Colonic mucosa (tissue), 4 donors: ENCODE measurements at regions of chr7 and their contacts with region 1.

Region 1: DNA sequence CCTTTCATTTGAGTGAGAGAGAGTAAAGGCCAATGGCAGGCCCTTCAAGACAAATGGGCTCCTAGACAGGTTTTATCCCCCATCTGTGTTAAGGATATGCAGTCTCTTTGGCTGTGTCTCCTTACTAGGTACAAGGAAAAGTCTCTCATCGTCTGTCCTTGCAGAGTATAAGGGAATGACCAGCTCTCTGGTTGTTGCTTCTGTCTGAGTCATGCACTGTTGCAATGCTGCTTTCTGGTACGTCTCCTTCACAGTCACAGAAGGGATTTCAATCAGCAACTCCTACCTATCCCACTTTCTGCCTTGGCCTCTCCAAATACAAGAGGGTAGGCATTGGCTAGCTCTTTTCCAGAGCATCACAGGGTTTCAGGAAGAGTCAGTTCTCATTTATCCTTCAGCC is 48.1 kb downstream of the CTTNBP2 start:
- DNase-seq: no peak
- H3K4me3 ChIP-seq: no peak overlapping the region
- H3K27ac ChIP-seq: no peak overlapping the region
- H3K4me1 ChIP-seq: no peaks in the 10 kb centered on the region
- H3K27me3 ChIP-seq: no peaks in the 10 kb centered on the region
- CTCF ChIP-seq: no peak

Region 2: GRCh38 chr7:117837841-117838240 is 12.7 kb after region 1 on chr7:
- intact Hi-C with region 1: loop called (anchors 2 kb)
- DNase-seq: no peak
- H3K4me3 ChIP-seq: no peak overlapping the region
- H3K27ac ChIP-seq: no peak overlapping the region
- H3K4me1 ChIP-seq: no peaks in the 10 kb centered on the region
- H3K27me3 ChIP-seq: no peaks in the 10 kb centered on the region
- CTCF ChIP-seq: no peak

Region 3: DNA sequence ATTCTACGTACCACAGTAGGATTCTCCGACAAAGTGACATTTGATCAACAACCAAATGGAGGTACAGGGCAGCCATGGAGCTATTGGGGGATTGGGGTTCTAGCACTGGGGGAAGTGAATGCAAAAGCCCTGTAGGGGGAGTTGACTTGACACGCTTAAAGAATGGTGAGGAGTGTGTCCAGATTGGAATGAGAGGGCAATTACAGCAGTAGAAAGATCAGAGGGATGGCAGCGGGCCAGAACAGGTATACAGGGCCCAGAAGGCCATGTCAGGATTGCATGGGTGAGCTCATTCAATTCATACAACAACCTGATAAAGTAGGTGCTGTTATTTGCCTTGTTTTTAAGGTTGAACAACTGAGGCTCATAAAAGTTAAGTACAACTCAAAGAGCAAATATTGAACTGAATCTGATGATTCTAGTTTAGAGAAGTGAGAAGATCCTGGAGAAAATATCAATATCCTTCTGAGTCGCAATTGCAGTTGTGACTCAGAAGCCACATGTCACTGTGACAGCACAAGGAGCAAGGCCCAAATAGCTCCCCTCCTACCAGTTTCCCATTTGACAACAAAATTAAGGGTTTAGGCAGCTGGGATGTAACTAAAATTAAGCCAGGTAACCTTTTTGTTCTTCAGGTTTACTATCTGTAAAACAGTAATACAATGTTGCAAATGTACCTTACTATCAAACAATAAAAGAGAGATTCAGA is 76.1 kb after region 1 on chr7:
- intact Hi-C with region 1: no loop called
- DNase-seq: peak; percentile 78
- H3K4me3 ChIP-seq: no peak overlapping the region
- H3K27ac ChIP-seq: no peak overlapping the region
- H3K4me1 ChIP-seq: no peaks in the 10 kb centered on the region
- H3K27me3 ChIP-seq: no peaks in the 10 kb centered on the region
- CTCF ChIP-seq: no peak